RWPE1 (cell line): ENCODE measurements at regions of chr3 and their contacts with region 1.

Region 1: GRCh38 chr3:141452036-141452435 is 34.8 kb upstream of the RASA2 start:
- DNase-seq: peak; percentile 35
- H3K27ac ChIP-seq: no peak overlapping the region
- CTCF ChIP-seq: peak; percentile 62

Region 2: GRCh38 chr3:141303481-141304223 is 148.4 kb before region 1 on chr3:
- CTCF ChIA-PET with region 1: interaction called, 18 read pairs
- POLR2A ChIA-PET with region 1: no interaction called
- DNase-seq: peak; percentile 58
- H3K27ac ChIP-seq: no peak overlapping the region
- CTCF ChIP-seq: peak; percentile 74

Region 3: GRCh38 chr3:141311496-141312353 is 140.3 kb before region 1 on chr3:
- CTCF ChIA-PET with region 1: interaction called, 19 read pairs
- POLR2A ChIA-PET with region 1: no interaction called
- DNase-seq: peak; percentile 97
- H3K27ac ChIP-seq: peak overlapping the region; percentile 61
- CTCF ChIP-seq: peak; percentile 80

Region 4: DNA sequence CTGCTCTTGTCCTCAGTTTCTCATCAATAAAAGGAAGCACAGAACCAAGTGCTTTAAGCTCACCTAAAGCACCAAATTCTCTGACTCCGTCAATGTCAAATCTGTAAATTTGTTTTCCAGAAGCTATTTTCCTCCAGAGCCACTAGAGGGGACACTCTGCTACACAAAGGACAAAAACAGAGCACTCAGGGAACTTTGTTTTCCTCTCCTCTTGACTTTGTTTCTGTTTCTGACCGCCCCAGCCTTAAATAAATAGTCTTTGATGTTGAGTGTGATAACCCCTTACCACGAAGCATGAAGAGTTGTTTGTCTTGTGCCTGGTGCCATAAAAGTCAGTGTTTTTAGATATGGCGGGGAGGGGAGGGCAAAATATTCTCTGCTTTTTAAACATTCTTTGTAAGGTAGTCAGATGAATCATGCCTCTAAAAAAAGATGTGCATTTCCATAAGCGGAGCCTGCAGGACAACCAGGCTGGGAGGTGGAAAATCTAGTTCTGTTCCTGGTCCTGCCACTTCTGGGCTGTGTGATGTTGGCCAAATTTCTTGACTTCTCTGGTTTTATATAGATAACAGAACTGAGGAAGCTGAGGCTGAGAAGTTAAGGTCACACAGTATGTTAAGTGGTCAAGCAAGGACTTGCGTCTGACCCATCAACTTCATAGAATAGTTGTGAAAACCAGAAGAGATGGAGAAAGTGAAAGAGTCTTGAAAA is 91.0 kb before region 1 on chr3:
- CTCF ChIA-PET with region 1: interaction called, 40 read pairs
- POLR2A ChIA-PET with region 1: no interaction called
- DNase-seq: peak; percentile 57
- H3K27ac ChIP-seq: no peak overlapping the region
- CTCF ChIP-seq: peak; percentile 80

Region 5: DNA sequence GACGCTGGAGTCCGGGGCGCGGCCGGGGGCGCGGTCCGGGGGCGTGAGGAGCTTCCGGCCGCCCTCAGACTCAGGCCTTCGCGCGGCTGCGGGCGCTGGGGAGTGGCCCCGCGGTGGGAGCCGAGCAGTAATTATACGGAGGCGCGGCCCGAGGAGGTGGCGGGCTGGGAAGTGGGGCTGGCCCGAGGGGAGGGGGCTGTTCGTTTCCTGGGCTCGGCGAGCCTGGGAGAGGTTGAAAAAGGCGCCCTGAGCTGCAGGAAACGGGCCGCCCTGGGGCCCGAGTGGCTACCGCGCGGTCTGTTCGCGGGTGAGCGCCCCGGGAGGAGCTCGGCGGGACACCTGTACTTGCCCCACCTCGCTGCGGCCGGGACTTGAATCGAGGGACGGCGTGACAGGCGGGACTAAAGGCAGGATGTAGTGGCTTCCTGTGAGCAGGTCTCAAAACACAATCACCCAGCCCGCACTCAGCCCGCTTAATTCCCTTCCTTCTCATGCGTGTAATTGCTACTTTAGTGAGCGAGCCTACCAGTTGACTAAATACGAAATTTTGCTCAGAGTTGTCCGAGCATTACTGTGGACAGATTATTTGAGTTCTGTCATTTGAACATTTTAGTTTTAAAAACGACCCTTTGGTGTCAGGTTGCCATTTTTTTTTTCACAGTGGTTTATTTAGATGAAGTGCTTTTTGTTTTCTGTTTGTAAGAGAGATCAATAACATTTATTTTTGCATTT is 35.7 kb after region 1 on chr3:
- CTCF ChIA-PET with region 1: no interaction called
- POLR2A ChIA-PET with region 1: no interaction called
- DNase-seq: peak; percentile 64
- H3K27ac ChIP-seq: peak overlapping the region; percentile 95
- CTCF ChIP-seq: no peak